Astrocyte of the cerebellum (primary cell): ENCODE measurements at regions of chr1 and their contacts with region 1.

Region 1: DNA sequence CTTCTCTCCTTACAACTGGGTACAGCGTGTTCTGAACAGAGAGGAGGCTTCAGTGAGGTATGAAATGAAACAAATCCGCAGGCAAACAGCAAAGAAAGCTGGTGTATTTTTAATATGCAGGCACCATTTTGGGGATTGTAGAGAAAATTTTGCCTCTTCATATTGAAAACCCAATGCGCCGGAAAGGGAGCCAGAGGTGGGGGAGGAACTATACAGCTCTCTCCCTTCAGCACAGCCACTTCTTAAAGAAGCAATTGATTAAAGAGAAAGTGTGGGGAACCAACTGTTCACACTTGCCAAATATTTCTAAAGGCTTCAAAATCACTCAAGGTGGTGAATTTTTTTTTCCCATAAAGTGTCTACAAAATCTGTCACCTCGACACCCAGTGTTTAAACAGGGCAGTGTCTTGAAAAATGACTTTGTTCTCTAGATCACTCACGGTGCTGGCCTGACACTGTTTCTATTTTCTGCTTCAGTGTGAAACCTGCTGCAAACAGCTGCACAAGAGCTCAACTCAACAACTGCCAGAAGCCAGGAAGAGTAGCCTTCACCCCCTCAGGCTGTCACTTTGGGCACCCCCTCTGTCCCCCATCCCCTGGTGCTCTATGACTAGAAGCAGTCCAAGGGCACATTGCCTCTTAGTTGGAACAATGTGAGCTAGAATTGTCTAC is 123.8 kb upstream of the CTTNBP2NL start:
- DNase-seq: no peak
- H3K4me3 ChIP-seq: no peak overlapping the region
- CTCF ChIP-seq: no peak

Region 2: GRCh38 chr1:112230232-112230631 is 42.0 kb before region 1 on chr1:
- in situ Hi-C with region 1: no loop called
- DNase-seq: no peak
- H3K4me3 ChIP-seq: no peak overlapping the region
- CTCF ChIP-seq: no peak

Region 3: GRCh38 chr1:112344754-112345423 is 72.7 kb after region 1 on chr1:
- in situ Hi-C with region 1: loop called (anchors 5 kb)
- DNase-seq: no peak
- H3K4me3 ChIP-seq: no peak overlapping the region
- CTCF ChIP-seq: no peak